CD14-positive monocyte (primary cell): ENCODE measurements at regions of chr1 and their contacts with region 1.

Region 1: DNA sequence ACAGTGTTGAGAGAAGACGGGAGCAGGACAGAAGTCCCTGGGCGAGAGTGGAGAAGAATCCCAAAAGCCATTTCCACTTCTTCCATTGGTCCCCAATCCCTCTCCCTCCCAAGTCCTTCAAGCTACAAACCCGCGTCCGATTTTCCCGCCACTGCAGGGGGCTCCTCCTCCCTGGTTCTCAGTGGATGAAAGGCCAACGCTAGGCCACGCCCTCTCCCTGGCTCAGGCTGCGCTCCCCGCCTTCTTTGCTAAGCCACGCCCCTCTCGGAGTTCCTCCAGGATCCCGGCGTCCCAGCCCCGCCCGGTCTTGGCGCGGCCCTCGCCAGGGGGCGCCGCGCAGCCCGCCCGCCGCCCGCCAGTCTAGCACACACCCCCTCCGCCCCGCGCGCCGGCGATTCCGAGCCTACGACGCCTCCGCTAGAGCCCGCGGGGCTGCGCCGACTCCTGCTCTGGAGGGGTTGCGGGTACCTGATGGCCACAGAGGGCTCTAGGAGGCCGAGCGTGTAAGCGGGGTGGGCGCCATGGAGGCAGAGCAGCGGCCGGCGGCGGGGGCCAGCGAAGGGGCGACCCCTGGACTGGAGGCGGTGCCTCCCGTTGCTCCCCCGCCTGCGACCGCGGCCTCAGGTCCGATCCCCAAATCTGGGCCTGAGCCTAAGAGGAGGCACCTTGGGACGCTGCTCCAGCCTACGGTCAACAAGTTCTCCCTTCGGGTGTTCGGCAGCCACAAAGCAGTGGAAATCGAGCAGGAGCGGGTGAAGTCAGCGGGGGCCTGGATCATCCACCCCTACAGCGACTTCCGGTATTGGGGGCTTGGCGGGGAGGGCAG is at the start of gene HCN3:
- DNase-seq: peak; percentile 89 to 96 (median 93)
- H3K4me3 ChIP-seq: peak within 1 kb of the TSS; percentile 33 to 82 (median 63)
- H3K4me3 Mint-ChIP-seq: peak within 1 kb of the TSS; percentile 75 to 87
- H3K27ac ChIP-seq: no peak within 1 kb of the TSS
- H3K27ac Mint-ChIP-seq: peak within 1 kb of the TSS in 1 of 7 donors; percentile 9
- H3K4me1 ChIP-seq: peaks cover 28 to 35% of the 10 kb centered on the region in 2 donors
- H3K4me1 Mint-ChIP-seq: peaks cover 33% of the 10 kb centered on the region
- H3K27me3 ChIP-seq: peaks cover 0 to 20% of the 10 kb centered on the region in 2 donors
- H3K27me3 Mint-ChIP-seq: peaks cover 12 to 19% (median 14%) of the 10 kb centered on the region in 3 donors
- CTCF ChIP-seq: peak; percentile 54
- polyA plus RNA-seq, gene HCN3: 0.15 to 2.3 TPM in 2 of 3 donors, not detected in the other

Region 2: DNA sequence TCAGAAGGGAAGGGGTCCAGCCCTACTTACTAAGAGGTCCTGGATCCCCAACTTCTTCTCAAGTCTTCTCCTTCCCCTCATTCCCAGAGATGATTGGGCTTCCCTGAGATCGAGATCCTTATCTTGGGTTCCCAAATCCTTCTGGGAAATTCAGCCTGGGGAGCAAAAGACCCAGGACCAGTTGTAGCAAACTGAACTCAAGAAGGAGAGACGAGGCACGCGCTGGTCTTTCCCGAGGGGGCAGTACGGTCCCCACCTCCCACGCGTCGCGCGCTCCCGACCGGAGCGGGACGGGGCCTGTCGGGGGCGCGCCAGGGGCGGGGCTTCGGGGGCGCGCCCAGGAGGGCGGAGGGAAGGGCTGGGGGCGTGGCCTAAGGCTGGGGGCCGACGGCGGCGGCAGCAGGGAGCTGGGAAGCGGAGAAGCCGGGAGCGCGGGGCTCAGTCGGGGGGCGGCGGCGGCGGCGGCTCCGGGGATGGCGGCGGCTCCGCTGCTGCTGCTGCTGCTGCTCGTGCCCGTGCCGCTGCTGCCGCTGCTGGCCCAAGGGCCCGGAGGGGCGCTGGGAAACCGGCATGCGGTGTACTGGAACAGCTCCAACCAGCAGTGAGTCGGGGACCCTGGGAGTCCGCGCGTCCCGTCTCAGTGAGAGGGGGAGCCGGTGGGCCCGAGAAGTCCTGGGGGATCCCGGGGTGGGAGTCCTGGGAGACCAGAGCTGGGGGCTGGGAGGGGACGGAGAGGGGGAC is 198.6 kb before region 1 on chr1 and contains the start of gene EFNA3:
- intact Hi-C with region 1: no loop called
- DNase-seq: peak in 1 of 3 donors; percentile 44
- H3K4me3 ChIP-seq: peak within 1 kb of the TSS in 1 of 3 experiments; percentile 67
- H3K4me3 Mint-ChIP-seq: peak within 1 kb of the TSS; percentile 65 to 91
- H3K27ac ChIP-seq: no peak within 1 kb of the TSS
- H3K27ac Mint-ChIP-seq: peak within 1 kb of the TSS in 1 of 7 donors; percentile 12
- H3K4me1 ChIP-seq: peaks cover 43 to 53% of the 10 kb centered on the region in 2 donors
- H3K4me1 Mint-ChIP-seq: peaks cover 36% of the 10 kb centered on the region
- H3K27me3 ChIP-seq: peaks cover 54 to 73% of the 10 kb centered on the region in 2 donors
- H3K27me3 Mint-ChIP-seq: peaks cover 54 to 77% (median 67%) of the 10 kb centered on the region in 3 donors
- CTCF ChIP-seq: no peak
- polyA plus RNA-seq, gene EFNA3: 0.45 to 1.7 (median 0.92) TPM

Region 3: DNA sequence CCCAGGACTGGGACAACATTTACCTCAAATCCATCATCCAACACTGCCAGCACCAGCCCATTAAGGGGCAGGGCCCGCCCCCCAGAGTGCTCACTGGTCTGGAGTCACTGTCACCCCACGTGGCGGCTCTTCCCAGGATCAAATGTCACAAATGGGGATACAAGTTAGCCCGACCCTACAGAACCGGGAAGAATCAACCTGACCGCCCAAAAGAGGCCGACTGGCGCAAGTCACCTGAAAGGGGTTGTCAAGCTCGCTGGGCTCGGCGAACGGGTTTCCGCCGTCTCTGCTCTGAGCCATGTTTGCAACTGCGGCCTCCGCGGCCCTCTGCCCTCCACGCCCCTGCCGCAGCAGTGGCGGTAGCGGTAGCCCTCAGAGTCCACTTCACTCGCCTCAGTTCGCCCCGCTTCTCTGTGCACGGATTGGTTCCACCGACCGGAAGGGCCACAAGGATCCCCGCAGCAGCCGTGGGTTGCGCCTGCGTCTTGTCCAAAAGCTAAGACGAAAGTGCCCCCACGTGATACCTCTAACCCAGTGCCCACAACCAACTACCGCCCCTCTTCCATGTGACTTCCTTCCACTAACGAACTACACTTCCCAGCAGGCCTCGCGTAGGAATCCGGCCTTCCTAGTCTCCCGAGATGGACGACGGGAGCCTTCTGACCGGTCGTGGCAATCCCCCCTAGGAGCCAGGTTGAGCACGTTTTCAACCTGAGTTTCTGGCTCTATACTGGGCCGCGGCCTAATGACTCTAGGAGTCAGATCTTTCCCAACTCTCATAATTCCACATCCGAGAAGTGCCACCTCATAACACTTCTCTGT is 15.2 kb before region 1 on chr1 and contains the start of gene SCAMP3:
- intact Hi-C with region 1: loop called in 1 of 2 experiments (anchors 2 kb)
- DNase-seq: peak; percentile 92 to 98 (median 98)
- H3K4me3 ChIP-seq: peak within 1 kb of the TSS; percentile 50 to 95 (median 77)
- H3K4me3 Mint-ChIP-seq: peak within 1 kb of the TSS; percentile 93 to 94
- H3K27ac ChIP-seq: peak within 1 kb of the TSS; percentile 56 to 83
- H3K27ac Mint-ChIP-seq: peak within 1 kb of the TSS; percentile 92 to 97 (median 95)
- H3K4me1 ChIP-seq: peaks cover 14 to 17% of the 10 kb centered on the region in 2 donors
- H3K4me1 Mint-ChIP-seq: peaks cover 20% of the 10 kb centered on the region
- H3K27me3 ChIP-seq: no peaks in the 10 kb centered on the region
- H3K27me3 Mint-ChIP-seq: no peaks in the 10 kb centered on the region
- CTCF ChIP-seq: no peak
- polyA plus RNA-seq, gene SCAMP3: 54.9 to 69.8 (median 64.9) TPM

Region 4: DNA sequence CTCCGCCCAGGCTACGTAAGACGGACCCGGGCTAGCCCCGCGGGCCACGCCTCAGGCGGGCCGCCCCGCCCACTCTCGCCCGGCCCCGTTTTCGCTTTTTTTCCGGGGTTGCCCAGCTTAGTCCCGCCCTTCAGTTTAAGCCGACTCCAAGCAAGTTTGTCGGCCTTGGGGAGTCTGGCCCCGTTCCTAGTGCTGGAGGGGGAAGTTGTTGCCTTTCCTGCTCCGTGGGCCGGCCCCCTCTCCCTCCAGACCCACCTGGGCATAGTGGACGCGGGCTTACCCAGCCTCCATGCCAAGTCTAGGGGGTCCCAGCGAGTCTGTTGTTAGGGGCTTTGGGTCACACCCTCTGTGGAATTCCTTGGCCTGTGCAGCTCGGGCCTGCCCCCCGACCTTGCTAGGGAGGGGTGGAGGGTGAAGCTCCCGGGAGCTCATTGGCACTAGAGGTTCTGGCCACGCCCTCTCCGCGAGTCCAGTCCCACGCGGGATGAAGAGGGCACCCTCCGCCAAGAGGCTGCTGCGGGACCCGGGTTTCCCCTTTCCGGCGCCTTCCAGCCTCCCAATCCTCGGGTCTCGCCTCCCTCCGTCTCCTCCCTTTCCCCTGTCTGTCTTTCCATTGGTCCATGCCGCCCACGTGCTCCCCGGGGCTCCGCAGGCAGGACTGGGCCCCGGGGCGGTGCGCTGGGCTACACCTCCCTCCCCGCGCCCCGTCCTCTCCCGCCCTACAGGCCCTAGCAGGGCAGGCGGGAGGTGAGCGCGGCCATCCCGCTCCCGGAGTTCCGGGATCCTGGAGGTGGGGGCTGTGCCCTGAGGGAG is 46.7 kb after region 1 on chr1:
- intact Hi-C with region 1: loop called (anchors 2 to 5 kb)
- DNase-seq: peak; percentile 90 to 94 (median 94)
- H3K4me3 ChIP-seq: peak overlapping the region; percentile 62 to 84 (median 80)
- H3K4me3 Mint-ChIP-seq: peak overlapping the region; percentile 83 to 90
- H3K27ac ChIP-seq: peak overlapping the region; percentile 71 to 91
- H3K27ac Mint-ChIP-seq: peak overlapping the region; percentile 74 to 96 (median 89)
- H3K4me1 ChIP-seq: peaks cover 31 to 56% of the 10 kb centered on the region in 2 donors
- H3K4me1 Mint-ChIP-seq: peaks cover 50% of the 10 kb centered on the region
- H3K27me3 ChIP-seq: no peaks in the 10 kb centered on the region
- H3K27me3 Mint-ChIP-seq: peaks cover 2 to 7% (median 2%) of the 10 kb centered on the region in 3 donors
- CTCF ChIP-seq: no peak